Heart right ventricle (tissue), 16 donors: ENCODE measurements at regions of chr1 and their contacts with region 1.

Region 1: DNA sequence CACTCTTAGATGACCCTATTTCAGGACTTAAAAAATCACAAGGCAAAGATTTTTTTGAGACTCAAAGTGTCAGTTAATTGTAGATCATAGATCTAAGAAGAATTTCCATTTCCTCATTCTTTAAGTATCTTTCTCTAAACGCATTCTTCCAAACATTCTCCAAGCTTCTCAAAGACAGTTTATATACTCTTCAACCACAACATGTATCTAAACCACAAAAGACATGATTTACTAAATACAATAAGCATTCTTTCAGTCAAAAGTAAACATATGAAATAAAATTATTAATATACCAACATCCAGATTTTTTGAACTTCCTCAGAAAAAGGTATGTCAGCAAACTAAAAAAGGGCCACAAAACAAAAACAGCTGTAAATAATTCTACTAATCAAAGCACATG is 24.4 kb downstream of the RC3H1 start:
- DNase-seq: no peak
- ATAC-seq: no peak
- H3K4me3 ChIP-seq: no peak overlapping the region
- H3K27ac ChIP-seq: no peak overlapping the region
- H3K4me1 ChIP-seq: peaks cover 0 to 49% (median 23%) of the 10 kb centered on the region in 9 donors
- H3K27me3 ChIP-seq: no peaks in the 10 kb centered on the region
- CTCF ChIP-seq: no peak

Region 2: DNA sequence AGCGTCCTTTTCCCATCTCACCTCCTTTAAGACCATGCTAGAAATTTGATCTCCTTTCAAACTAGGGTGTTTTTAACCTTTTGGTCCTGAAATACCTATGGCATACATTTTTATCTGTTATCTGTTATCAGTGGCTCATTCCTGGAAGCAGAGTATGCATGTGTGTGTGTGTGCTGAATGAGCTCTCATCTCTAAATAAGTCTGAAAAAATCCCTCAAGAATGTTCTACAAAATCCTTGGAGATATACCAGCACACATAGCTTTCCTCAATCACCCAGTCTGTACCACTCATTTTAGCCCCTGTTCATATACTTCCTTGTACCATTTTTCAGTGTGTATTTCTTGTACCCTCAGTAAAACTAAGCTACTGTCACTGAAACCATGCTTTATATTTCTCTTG is 179.3 kb before region 1 on chr1:
- intact Hi-C with region 1: no loop called
- DNase-seq: no peak
- ATAC-seq: no peak
- H3K4me3 ChIP-seq: no peak overlapping the region
- H3K27ac ChIP-seq: no peak overlapping the region
- H3K4me1 ChIP-seq: peaks cover 0 to 11% (median 3%) of the 10 kb centered on the region in 9 donors
- H3K27me3 ChIP-seq: no peaks in the 10 kb centered on the region
- CTCF ChIP-seq: no peak

Region 3: GRCh38 chr1:173954179-173954578 is 43.6 kb before region 1 on chr1:
- intact Hi-C with region 1: loop called in 1 of 10 experiments (anchors 1 kb)
- DNase-seq: no peak
- ATAC-seq: no peak
- H3K4me3 ChIP-seq: no peak overlapping the region
- H3K27ac ChIP-seq: no peak overlapping the region
- H3K4me1 ChIP-seq: no peaks in the 10 kb centered on the region
- H3K27me3 ChIP-seq: no peaks in the 10 kb centered on the region
- CTCF ChIP-seq: no peak

Region 4: GRCh38 chr1:174074757-174075156 is 77.0 kb after region 1 on chr1:
- intact Hi-C with region 1: loop called in 1 of 10 experiments (anchors 10 kb)
- DNase-seq: no peak
- ATAC-seq: no peak
- H3K4me3 ChIP-seq: no peak overlapping the region
- H3K27ac ChIP-seq: no peak overlapping the region
- H3K4me1 ChIP-seq: peaks cover 0 to 5% (median 0%) of the 10 kb centered on the region in 9 donors
- H3K27me3 ChIP-seq: no peaks in the 10 kb centered on the region
- CTCF ChIP-seq: peak in 8 of 9 donors; percentile 19 to 65 (median 53)